ENCODE measurements at regions of chr10 and their contacts with region 1.

Region 1: GRCh38 chr10:45672181-45673073 is at the start of gene ZFAND4:
- DNase-seq: peak; percentile 91 to 96 (median 92)
- H3K4me3 ChIP-seq: peak within 1 kb of the TSS; percentile 80
- H3K4me3 Mint-ChIP-seq: peak within 1 kb of the TSS; percentile 88 to 93 (median 92)
- H3K27ac ChIP-seq: peak within 1 kb of the TSS; percentile 66
- H3K27ac Mint-ChIP-seq: peak within 1 kb of the TSS; percentile 51 to 93 (median 91)
- H3K4me1 ChIP-seq: peaks cover 11% of the 10 kb centered on the region
- H3K4me1 Mint-ChIP-seq: peaks cover 36 to 49% (median 46%) of the 10 kb centered on the region in 3 donors
- H3K27me3 ChIP-seq: no peaks in the 10 kb centered on the region
- H3K27me3 Mint-ChIP-seq: no peaks in the 10 kb centered on the region
- total RNA-seq, gene ZFAND4: 11.0 to 11.7 TPM

Region 2: DNA sequence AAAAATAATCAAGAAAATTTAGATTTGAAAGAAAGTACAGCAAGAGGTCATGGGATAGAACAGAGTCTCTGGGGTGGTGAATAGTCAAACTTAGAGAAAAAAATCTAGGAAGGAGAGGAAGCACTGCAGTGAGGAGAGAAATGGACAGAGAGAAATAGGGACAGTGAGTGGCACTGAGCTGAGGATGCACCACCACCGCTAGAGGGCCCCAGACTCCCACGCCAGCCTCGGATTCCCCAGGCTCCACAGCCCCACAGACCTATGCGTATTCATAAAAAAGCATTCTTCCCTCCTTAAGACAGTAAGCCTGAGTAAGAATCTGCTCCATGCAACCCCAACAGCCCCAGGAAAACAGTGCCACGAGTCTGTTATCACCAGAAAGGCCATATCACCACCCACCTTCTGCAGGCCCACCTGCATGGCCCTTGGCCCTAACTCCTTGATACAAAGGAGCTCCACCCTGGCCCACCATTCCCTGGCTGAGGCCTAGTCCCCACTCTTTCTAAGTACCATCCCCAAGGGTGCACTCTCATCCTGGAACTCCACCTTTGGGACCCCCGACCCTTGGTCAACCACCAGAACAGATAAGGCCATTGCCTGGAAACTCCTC is 207.4 kb before region 1 on chr10:
- CTCF ChIA-PET with region 1: interaction called, 10 read pairs
- POLR2A ChIA-PET with region 1: no interaction called
- DNase-seq: peak; percentile 53 to 80 (median 61)
- H3K4me3 ChIP-seq: no peak overlapping the region
- H3K4me3 Mint-ChIP-seq: peak overlapping the region in 1 of 7 donors; percentile 1
- H3K27ac ChIP-seq: no peak overlapping the region
- H3K27ac Mint-ChIP-seq: peak overlapping the region in 4 of 8 donors; percentile 5 to 84 (median 62)
- H3K4me1 ChIP-seq: peaks cover 16% of the 10 kb centered on the region
- H3K4me1 Mint-ChIP-seq: peaks cover 18 to 30% (median 26%) of the 10 kb centered on the region in 3 donors
- H3K27me3 ChIP-seq: no peaks in the 10 kb centered on the region
- H3K27me3 Mint-ChIP-seq: no peaks in the 10 kb centered on the region

Region 3: GRCh38 chr10:45520476-45520875 is 152.0 kb before region 1 on chr10:
- CTCF ChIA-PET with region 1: no interaction called
- POLR2A ChIA-PET with region 1: no interaction called
- DNase-seq: no peak
- H3K4me3 ChIP-seq: no peak overlapping the region
- H3K4me3 Mint-ChIP-seq: no peak overlapping the region
- H3K27ac ChIP-seq: no peak overlapping the region
- H3K27ac Mint-ChIP-seq: no peak overlapping the region
- H3K4me1 ChIP-seq: no peaks in the 10 kb centered on the region
- H3K4me1 Mint-ChIP-seq: peaks cover 19 to 61% (median 29%) of the 10 kb centered on the region in 3 donors
- H3K27me3 ChIP-seq: no peaks in the 10 kb centered on the region
- H3K27me3 Mint-ChIP-seq: no peaks in the 10 kb centered on the region

Region 4: DNA sequence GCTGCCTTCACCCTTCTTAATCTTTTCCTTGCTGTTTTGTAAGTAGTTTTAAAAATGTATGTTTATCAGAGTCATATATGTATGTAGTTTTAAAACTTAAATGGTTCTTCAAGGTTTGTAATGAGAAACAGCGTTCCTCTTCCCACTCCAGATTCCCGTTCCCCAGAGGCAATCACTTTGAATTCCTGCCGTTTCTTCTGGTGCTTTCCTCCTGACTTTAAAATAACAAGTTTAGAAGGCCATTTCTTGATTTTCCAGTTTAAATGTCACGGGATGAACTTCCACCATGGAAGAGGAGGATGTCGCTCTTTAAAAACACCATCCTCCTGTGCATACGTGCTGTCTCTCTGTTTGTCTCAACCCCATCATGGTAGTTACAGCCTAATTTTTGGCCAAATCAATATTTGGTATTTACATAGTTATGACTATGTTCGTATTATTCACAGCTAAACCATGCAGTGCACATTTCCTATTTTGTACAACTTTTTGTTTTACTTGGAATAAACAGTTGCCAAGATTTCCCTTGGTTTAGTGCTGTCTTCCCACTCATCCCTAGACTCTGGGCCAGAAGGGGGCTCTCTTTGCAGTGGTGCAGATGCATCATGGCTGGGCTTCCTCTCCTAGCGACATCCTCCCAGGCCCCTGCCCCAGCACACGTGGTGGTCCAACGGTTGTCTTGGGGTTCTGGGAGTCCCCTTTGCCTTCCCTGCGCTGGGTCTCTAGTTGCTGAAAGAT is 1390.2 kb after region 1 on chr10:
- CTCF ChIA-PET with region 1: no interaction called
- POLR2A ChIA-PET with region 1: no interaction called
- DNase-seq: no peak
- H3K4me3 ChIP-seq: no peak overlapping the region
- H3K4me3 Mint-ChIP-seq: no peak overlapping the region
- H3K27ac ChIP-seq: no peak overlapping the region
- H3K27ac Mint-ChIP-seq: no peak overlapping the region
- H3K4me1 ChIP-seq: no peaks in the 10 kb centered on the region
- H3K4me1 Mint-ChIP-seq: no peaks in the 10 kb centered on the region
- H3K27me3 ChIP-seq: no peaks in the 10 kb centered on the region
- H3K27me3 Mint-ChIP-seq: peaks cover 0 to 3% of the 10 kb centered on the region in 2 donors